Ovary (tissue), 10 donors: ENCODE measurements at regions of chr10 and their contacts with region 1.

Region 1: GRCh38 chr10:6423004-6423403 is 157.1 kb downstream of the PRKCQ start:
- DNase-seq: no peak
- H3K4me3 ChIP-seq: no peak overlapping the region
- H3K27ac ChIP-seq: no peak overlapping the region
- H3K4me1 ChIP-seq: no peaks in the 10 kb centered on the region
- H3K27me3 ChIP-seq: no peaks in the 10 kb centered on the region
- CTCF ChIP-seq: no peak
- EP300 ChIP-seq: no peak
- POLR2A ChIP-seq: no peak

Region 2: DNA sequence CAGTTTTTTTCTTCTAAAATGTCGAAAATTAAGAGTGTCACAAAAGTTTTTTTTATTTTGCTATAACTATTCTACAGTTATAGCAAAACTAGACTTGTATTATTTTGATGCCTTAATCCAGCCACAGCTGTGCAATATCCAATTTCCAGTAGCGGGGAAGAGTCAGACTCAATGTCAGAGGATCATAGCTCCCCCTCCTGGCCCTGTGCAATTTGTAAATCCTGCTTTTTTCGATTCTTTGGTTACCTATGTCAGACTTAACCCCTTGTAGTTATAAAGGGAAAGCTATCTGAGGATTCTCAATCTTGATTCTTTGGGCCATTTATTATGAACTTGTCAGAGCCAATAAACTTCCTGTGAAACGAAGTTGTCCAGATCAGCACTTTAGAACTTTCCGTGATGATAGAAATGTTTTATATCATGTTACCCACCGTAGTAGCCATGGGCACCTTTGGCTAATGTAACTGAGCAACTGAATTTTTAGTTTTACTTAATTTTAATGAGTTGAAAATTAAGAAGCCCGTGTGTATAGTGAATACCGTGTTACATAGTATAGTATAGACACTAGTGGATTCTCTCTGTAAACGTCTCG is 244.8 kb after region 1 on chr10:
- intact Hi-C with region 1: loop called in 1 of 4 experiments (anchors 10 kb)
- DNase-seq: no peak
- H3K4me3 ChIP-seq: no peak overlapping the region
- H3K27ac ChIP-seq: no peak overlapping the region
- H3K4me1 ChIP-seq: no peaks in the 10 kb centered on the region
- H3K27me3 ChIP-seq: no peaks in the 10 kb centered on the region
- CTCF ChIP-seq: no peak
- EP300 ChIP-seq: no peak
- POLR2A ChIP-seq: no peak